Motor neuron (in vitro differentiated cells): ENCODE measurements at regions of chr13 and their contacts with region 1.

Region 1: DNA sequence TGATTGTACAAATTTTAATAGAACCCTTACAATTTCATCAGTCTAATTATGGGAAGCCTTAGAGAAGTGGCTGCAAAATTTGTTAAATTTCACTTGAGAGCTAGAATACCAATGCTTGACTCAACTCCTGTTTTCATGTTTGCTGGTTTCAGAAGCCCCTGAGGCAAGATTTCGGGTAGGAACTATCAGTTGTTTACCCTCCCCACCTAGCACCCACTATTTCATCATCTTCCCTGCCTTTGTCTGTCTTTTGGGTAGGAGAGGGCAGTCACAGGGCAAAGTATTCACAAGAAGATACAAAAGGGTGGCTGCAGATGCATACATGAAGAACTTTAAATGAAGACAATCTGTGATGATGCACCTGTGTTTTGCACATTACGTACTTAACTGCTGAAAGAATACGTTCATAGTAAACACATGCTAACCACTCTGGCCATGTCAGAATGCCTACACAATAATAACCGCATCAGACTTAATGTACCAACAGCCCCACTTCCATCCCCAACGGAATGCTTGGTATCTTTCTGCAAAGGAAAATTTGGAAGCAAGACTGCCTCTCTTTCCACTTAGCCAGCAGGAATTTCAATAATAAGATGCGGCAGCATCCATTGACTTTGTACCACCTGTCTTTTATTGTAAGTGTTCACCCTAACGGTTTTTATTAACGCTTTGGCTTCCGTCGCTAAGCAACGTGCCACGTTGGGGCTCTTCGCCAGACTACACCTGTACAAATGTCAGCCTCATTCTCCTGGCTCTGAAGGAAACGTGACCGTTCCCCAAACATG is 30.4 kb downstream of the TPT1 start:
- ATAC-seq: no peak
- H3K4me3 ChIP-seq: peak overlapping the region in 3 of 5 donors; percentile 27 to 30 (median 28)
- H3K27ac ChIP-seq: no peak overlapping the region
- H3K4me1 ChIP-seq: peaks cover 4 to 5% of the 10 kb centered on the region in 2 donors

Region 2: DNA sequence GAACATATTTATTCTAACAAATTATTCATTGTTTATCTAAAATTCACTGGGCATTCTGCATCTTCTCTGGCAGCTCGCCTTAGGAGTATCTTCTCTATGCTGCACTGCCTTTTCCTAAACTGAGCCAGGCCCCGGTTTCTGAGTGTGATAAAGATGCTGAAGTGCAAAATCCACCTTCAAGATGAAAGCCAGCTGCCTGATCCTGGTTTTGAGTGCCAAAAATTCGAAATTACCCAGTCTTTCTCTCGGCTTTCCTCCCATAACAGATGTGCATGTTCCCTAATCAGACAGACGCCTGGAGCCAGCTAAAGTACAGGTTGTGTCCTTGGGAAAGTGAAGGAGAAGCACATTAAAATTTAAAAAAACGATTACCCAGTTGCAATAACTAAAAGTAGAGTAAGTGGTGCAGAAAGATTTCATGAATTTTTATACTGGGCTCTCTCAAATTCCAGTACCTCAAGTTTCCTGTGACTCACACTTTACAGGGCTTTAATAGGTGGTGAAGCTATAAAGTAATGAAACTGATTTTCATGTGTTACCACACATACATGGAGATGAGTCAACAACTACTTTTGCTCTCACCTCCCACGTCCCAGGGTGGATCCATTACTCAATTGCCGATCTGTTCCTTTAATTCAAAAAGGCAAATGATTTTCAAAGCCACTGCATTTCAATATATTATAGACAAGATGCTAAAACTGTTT is 255.2 kb before region 1 on chr13:
- in situ Hi-C with region 1: loop called in 1 of 9 experiments (anchors 25 kb)
- ATAC-seq: peak in 5 of 8 experiments; percentile 51 to 96 (median 89)
- H3K4me3 ChIP-seq: no peak overlapping the region
- H3K27ac ChIP-seq: no peak overlapping the region
- H3K4me1 ChIP-seq: peaks cover 7 to 11% of the 10 kb centered on the region in 2 donors

Region 3: DNA sequence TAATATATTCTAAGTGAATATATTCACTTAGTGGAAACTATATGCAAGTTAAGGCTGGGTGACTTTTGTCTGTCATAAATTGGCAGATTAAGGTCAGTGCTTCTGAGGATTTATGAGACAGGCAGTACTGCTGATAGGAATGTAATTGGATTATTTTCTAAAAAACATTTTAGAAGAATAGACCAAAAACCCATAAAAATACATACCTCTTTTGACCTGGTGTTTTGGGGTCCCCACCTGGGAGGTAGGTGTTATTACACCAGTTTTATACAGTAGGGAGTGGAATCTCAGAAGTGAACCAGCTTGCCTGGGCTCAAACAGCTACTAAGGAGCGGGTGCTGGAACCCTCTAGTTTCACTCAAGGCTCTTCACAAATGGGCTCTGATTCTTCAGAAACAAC is 179.5 kb after region 1 on chr13:
- in situ Hi-C with region 1: no loop called
- ATAC-seq: no peak
- H3K4me3 ChIP-seq: no peak overlapping the region
- H3K27ac ChIP-seq: no peak overlapping the region
- H3K4me1 ChIP-seq: no peaks in the 10 kb centered on the region